Activated CD4-positive, alpha-beta T cell treated with anti-CD3 and anti-CD28 coated beads, Interleukin-2, amount 10 ng/mL, durations not matched to agents 24 days and 14 days (primary cell): ENCODE measurements at regions of chr4 and their contacts with region 1.

Region 1: GRCh38 chr4:88007304-88008121 is at the start of gene PKD2:
- DNase-seq: peak; percentile 96
- H3K4me3 Mint-ChIP-seq: peak within 1 kb of the TSS; percentile 94
- H3K27ac Mint-ChIP-seq: peak within 1 kb of the TSS; percentile 88
- H3K4me1 Mint-ChIP-seq: peaks cover 31% of the 10 kb centered on the region
- H3K27me3 Mint-ChIP-seq: peaks cover 16% of the 10 kb centered on the region
- total RNA-seq, gene PKD2: 10.1 and 12.3 TPM in 2 replicates

Region 2: GRCh38 chr4:87749883-87750282 is 257.6 kb before region 1 on chr4:
- intact Hi-C with region 1: no loop called
- DNase-seq: no peak
- H3K4me3 Mint-ChIP-seq: no peak overlapping the region
- H3K27ac Mint-ChIP-seq: no peak overlapping the region
- H3K4me1 Mint-ChIP-seq: no peaks in the 10 kb centered on the region
- H3K27me3 Mint-ChIP-seq: no peaks in the 10 kb centered on the region

Region 3: GRCh38 chr4:87856816-87857215 is 150.7 kb before region 1 on chr4:
- intact Hi-C with region 1: no loop called
- DNase-seq: no peak
- H3K4me3 Mint-ChIP-seq: no peak overlapping the region
- H3K27ac Mint-ChIP-seq: no peak overlapping the region
- H3K4me1 Mint-ChIP-seq: no peaks in the 10 kb centered on the region
- H3K27me3 Mint-ChIP-seq: peaks cover 24% of the 10 kb centered on the region

Region 4: DNA sequence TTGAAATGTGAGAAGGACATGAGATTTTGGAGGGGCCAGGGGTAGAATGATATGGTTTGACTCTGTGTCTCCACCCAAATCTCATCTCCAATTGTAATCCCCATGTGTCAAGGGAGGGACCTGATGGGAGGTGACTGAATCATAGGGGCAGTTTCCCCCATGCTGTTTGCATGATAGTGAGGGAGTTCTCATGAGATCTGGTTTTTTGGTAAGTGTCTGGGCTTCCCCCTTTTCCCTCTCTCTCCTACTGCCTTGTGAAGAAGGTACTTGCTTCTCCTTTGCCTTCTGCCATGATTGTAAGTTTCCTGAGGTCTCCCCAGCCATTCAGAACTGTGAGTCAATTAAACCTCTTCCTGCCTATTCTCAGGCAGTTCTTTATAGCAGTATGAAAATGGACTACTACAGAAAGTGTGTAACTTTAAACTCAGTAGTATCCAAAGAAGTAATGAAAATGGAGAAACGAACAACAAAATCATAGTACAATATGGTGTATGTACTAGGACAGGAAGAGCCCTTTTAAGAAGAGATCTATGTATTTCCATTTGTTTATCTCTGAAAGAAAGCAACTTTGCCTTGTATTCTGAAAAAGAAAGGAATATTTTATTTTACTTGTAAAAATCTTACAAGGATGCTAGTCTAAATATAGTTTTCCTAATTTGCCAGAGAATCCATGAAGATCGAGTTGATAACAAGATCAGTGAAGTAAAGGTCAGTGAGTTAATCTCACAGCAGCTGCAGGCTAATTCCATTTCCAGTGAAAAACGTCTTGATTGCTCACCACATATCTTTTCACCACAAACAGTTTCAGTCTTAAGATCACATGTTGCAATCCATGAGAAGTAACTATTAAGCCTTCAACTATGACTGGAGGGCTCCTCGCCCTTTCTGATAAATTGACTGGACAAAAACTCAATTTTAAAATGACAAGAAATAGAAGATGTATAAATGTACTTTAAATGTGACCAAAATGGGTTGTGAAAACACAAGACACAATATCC is 20.4 kb after region 1 on chr4:
- intact Hi-C with region 1: loop called (anchors 2 kb)
- DNase-seq: no peak
- H3K4me3 Mint-ChIP-seq: peak overlapping the region; percentile 28
- H3K27ac Mint-ChIP-seq: peak overlapping the region; percentile 73
- H3K4me1 Mint-ChIP-seq: peaks cover 14% of the 10 kb centered on the region
- H3K27me3 Mint-ChIP-seq: no peaks in the 10 kb centered on the region